A549 (cell line): ENCODE measurements at regions of chr1 and their contacts with region 1.

Region 1: DNA sequence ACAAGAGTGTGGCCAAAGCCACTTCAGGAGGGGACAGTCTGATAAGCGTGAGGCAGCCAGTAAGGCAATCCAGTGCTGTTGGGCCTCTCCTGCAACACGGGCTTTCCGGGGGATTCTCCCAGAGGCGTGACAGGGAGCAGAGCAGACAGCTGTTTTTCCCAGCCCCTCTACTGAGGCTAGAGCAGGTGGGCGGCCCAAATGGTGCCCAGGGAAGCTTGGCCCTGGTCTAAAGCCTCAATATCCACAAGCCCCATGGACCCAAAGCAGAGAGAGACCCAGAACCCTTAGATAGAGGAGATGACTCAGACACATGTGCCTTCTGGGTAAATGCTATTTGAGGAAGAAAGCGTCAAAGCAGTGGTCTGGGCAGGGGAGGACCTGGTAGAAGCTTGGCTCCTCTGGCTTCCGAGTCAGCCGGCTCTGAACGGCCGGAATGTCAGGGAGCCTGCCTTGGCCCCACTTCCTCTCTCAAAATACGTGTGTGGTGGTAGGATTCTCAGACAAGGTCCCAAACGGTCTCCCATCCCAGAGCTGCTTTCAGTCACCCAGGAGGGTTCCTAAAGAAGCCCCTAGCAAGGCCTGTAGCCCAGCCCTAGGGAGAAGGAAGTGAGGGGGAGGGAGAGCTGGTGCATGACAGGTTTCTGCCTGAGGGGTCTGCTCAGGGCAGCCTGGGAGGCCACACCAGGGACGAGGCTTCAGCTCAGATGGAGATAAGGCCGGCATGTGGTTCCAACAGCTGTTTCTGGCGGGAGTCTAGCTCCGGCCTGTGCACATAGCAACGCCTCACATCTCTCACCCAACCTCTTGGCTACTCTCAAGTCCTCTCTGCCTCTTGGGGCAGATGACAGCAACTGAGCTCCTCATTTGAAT is 28.8 kb downstream of the PIK3C2B start:
- DNase-seq: no peak
- ATAC-seq: no peak
- H3K4me3 ChIP-seq: no peak overlapping the region
- H3K27ac ChIP-seq: no peak overlapping the region
- H3K4me1 ChIP-seq: no peaks in the 10 kb centered on the region
- CTCF ChIP-seq: no peak
- EP300 ChIP-seq: no peak
- POLR2A ChIP-seq: no peak
- RAD21 ChIP-seq: no peak

Region 2: DNA sequence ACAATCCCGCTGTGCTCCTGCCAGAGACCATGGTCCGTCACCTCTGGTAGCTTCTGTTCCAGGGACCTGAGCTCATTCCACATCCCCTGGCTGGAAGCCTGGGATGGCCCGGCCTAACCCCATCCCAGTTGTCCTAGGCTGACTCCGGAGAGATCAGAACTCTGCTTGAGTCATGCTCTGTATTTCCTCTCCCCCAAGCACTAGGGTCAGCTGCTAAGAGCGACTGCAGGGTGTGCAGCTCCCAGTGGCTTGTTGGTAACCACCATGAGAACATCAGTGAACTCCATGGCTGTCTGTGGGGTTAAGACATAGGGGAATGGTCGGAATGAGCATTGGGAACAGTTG is 215.1 kb before region 1 on chr1:
- CTCF ChIA-PET with region 1: no interaction called
- POLR2A ChIA-PET with region 1: no interaction called
- DNase-seq: no peak
- ATAC-seq: no peak
- H3K4me3 ChIP-seq: no peak overlapping the region
- H3K27ac ChIP-seq: no peak overlapping the region
- H3K4me1 ChIP-seq: peaks cover 22% of the 10 kb centered on the region
- CTCF ChIP-seq: no peak
- EP300 ChIP-seq: no peak
- POLR2A ChIP-seq: no peak
- RAD21 ChIP-seq: no peak

Region 3: GRCh38 chr1:204453141-204453772 is 12.5 kb before region 1 on chr1:
- CTCF ChIA-PET with region 1: interaction called, 74 read pairs
- POLR2A ChIA-PET with region 1: no interaction called
- DNase-seq: no peak
- ATAC-seq: no peak
- H3K4me3 ChIP-seq: no peak overlapping the region
- H3K27ac ChIP-seq: no peak overlapping the region
- H3K4me1 ChIP-seq: peaks cover 36% of the 10 kb centered on the region
- CTCF ChIP-seq: no peak
- EP300 ChIP-seq: no peak
- POLR2A ChIP-seq: no peak
- RAD21 ChIP-seq: no peak